Natural killer cell (primary cell): ENCODE measurements at regions of chr3 and their contacts with region 1.

Region 1: DNA sequence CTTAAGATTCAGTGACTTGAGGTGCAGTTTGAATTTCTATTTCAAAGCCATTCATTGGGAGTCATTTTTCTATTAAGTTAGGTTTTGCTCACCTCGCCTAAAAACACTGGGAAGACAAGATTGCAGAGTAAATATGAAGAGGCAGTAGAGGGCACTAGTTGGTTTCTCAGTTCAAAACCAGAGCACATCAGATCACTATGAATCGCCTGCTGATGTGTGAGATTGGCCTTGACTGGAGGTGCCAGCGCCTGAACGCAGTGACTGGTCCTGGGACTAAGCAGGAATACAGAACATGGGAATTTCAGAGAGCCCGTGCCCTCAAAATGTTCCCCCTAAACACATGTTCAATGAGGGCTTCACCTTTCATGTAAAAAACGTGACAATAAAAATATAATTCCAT is 229.0 kb downstream of the ITPR1 start:
- DNase-seq: peak in 1 of 2 donors; percentile 55
- ATAC-seq: peak; percentile 76 to 95 (median 91)
- H3K4me3 ChIP-seq: no peak overlapping the region
- H3K4me3 Mint-ChIP-seq: no peak overlapping the region
- H3K27ac ChIP-seq: no peak overlapping the region
- H3K27ac Mint-ChIP-seq: peak overlapping the region; percentile 20 to 34
- H3K4me1 ChIP-seq: peaks cover 6% of the 10 kb centered on the region
- H3K4me1 Mint-ChIP-seq: peaks cover 19 to 28% of the 10 kb centered on the region in 2 donors
- H3K27me3 ChIP-seq: no peaks in the 10 kb centered on the region
- H3K27me3 Mint-ChIP-seq: no peaks in the 10 kb centered on the region
- CTCF ChIP-seq: peak; percentile 53

Region 2: GRCh38 chr3:4906107-4906621 is 184.1 kb after region 1 on chr3:
- intact Hi-C with region 1: loop called (anchors 5 kb)
- DNase-seq: no peak
- ATAC-seq: peak in 1 of 3 donors; percentile 27
- H3K4me3 ChIP-seq: no peak overlapping the region
- H3K4me3 Mint-ChIP-seq: peak overlapping the region; percentile 85
- H3K27ac ChIP-seq: no peak overlapping the region
- H3K27ac Mint-ChIP-seq: peak overlapping the region; percentile 90 to 95
- H3K4me1 ChIP-seq: peaks cover 35% of the 10 kb centered on the region
- H3K4me1 Mint-ChIP-seq: peaks cover 52 to 65% of the 10 kb centered on the region in 2 donors
- H3K27me3 ChIP-seq: no peaks in the 10 kb centered on the region
- H3K27me3 Mint-ChIP-seq: no peaks in the 10 kb centered on the region
- CTCF ChIP-seq: no peak

Region 3: GRCh38 chr3:5489536-5489935 is 767.4 kb after region 1 on chr3:
- intact Hi-C with region 1: no loop called
- DNase-seq: no peak
- ATAC-seq: no peak
- H3K4me3 ChIP-seq: no peak overlapping the region
- H3K4me3 Mint-ChIP-seq: no peak overlapping the region
- H3K27ac ChIP-seq: no peak overlapping the region
- H3K27ac Mint-ChIP-seq: no peak overlapping the region
- H3K4me1 ChIP-seq: no peaks in the 10 kb centered on the region
- H3K4me1 Mint-ChIP-seq: no peaks in the 10 kb centered on the region
- H3K27me3 ChIP-seq: no peaks in the 10 kb centered on the region
- H3K27me3 Mint-ChIP-seq: no peaks in the 10 kb centered on the region
- CTCF ChIP-seq: no peak